ENCODE measurements at regions of chr15 and their contacts with region 1.

Region 1: GRCh38 chr15:34768518-34768917 is 13.7 kb upstream of the GJD2 start:
- DNase-seq: no peak
- H3K4me3 ChIP-seq: no peak overlapping the region
- H3K27ac ChIP-seq: no peak overlapping the region
- H3K4me1 ChIP-seq: no peaks in the 10 kb centered on the region
- H3K27me3 ChIP-seq: peaks cover 39% of the 10 kb centered on the region
- CTCF ChIP-seq: no peak

Region 2: DNA sequence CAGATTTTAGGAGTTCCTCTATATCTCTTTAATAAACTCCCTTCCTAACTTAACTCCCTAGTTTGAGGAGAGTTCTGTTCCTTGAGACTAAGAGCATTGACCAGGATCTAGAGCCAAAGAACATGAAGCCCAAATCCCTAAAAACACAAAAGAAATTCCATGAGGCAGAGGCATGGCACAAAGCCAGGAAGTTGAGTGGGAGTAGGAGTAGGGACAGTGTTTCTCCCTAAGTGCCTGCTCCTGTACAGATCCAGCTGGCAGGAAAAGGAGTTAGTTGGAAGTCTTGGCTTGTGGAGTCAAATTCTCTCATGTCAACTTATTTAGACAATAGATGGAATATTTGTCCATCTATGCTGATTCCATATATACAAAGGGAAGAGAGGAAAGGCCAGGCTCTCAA is 15.5 kb after region 1 on chr15:
- CTCF ChIA-PET with region 1: no interaction called
- POLR2A ChIA-PET with region 1: no interaction called
- intact Hi-C with region 1: loop called (anchors 2 kb)
- DNase-seq: no peak
- H3K4me3 ChIP-seq: no peak overlapping the region
- H3K27ac ChIP-seq: no peak overlapping the region
- H3K4me1 ChIP-seq: no peaks in the 10 kb centered on the region
- H3K27me3 ChIP-seq: peaks cover 45% of the 10 kb centered on the region
- CTCF ChIP-seq: no peak

Region 3: GRCh38 chr15:34795267-34796081 is 27.0 kb after region 1 on chr15 and contains the start of gene ACTC1:
- CTCF ChIA-PET with region 1: no interaction called
- POLR2A ChIA-PET with region 1: interaction called, 10 read pairs
- intact Hi-C with region 1: no loop called
- DNase-seq: no peak
- H3K4me3 ChIP-seq: no peak within 1 kb of the TSS
- H3K27ac ChIP-seq: no peak within 1 kb of the TSS
- H3K4me1 ChIP-seq: peaks cover 4% of the 10 kb centered on the region
- H3K27me3 ChIP-seq: peaks cover 79% of the 10 kb centered on the region
- CTCF ChIP-seq: no peak
- total RNA-seq, gene ACTC1: not detected in 2 replicates

Measured in A673 (cell line).